ENCODE measurements at regions of chr19 and their contacts with region 1.

Region 1: GRCh38 chr19:44752816-44753618 is 4.5 kb downstream of the BCL3 start:
- DNase-seq: peak; percentile 95 to 97 (median 96)
- ATAC-seq: peak; percentile 62 to 75 (median 71)
- H3K4me3 ChIP-seq: peak overlapping the region; percentile 25 to 72 (median 55)
- H3K27ac ChIP-seq: peak overlapping the region; percentile 81 to 98 (median 92)
- H3K4me1 ChIP-seq: peaks cover 0 to 59% (median 17%) of the 10 kb centered on the region in 4 donors
- H3K27me3 ChIP-seq: no peaks in the 10 kb centered on the region
- CTCF ChIP-seq: peak in 2 of 4 donors; percentile 8 to 16
- POLR2A ChIP-seq: peak; percentile 71

Region 2: GRCh38 chr19:44689056-44689895 is 63.7 kb before region 1 on chr19:
- intact Hi-C with region 1: loop called in 1 of 2 experiments (anchors 10 kb)
- DNase-seq: peak; percentile 78 to 82 (median 78)
- ATAC-seq: peak; percentile 39 to 65 (median 58)
- H3K4me3 ChIP-seq: no peak overlapping the region
- H3K27ac ChIP-seq: peak overlapping the region in 1 of 3 donors; percentile 30
- H3K4me1 ChIP-seq: peaks cover 3 to 52% (median 20%) of the 10 kb centered on the region in 4 donors
- H3K27me3 ChIP-seq: no peaks in the 10 kb centered on the region
- CTCF ChIP-seq: peak; percentile 91 to 93 (median 92)
- POLR2A ChIP-seq: no peak

Region 3: DNA sequence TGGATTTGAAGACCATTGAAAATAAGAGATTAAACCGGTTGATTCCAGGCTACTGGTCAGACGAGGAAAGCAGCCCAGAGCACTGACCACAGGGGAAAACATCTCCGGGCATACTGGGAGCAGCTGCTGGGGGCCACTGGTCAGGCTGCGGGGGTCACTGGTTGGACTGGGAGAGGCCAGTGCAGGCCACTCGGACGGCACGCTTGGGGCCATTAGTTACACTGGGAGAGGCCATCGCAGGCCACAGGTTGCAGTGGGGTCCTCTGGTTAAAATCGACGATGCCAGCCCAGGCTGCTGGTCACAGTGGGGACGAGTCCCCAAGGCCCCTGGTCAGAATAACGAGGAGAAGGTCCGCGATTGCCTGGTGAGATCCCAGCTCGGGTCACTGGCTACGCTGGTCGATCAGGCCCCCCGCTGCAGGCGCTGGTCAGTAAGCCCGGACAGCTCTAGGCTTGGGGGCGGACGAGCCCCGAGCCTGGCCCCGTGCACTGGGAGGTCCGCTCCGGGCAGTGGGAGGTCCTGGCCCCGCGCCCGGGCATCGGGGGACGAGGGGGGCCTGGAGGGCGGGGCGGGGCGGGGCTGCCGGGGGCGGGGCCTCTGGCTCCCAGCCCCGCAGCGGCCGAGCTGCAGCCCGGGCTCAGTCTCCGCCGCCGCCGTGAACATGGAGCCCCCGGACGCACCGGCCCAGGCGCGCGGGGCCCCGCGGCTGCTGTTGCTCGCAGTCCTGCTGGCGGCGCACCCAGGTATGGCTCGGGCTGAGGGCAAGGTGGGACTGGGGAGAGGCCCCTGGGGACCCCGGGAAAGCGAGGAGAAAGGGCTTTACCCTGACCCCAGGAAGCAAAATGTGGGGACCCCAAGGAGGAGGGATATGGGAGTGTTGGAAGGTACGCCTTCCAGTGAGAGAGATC is 55.7 kb after region 1 on chr19 and contains the start of gene BCAM:
- intact Hi-C with region 1: no loop called
- DNase-seq: peak; percentile 85 to 90 (median 86)
- ATAC-seq: peak; percentile 72 to 76 (median 74)
- H3K4me3 ChIP-seq: peak within 1 kb of the TSS; percentile 53 to 56 (median 54)
- H3K27ac ChIP-seq: peak within 1 kb of the TSS; percentile 38 to 75 (median 72)
- H3K4me1 ChIP-seq: peaks cover 0 to 23% (median 10%) of the 10 kb centered on the region in 4 donors
- H3K27me3 ChIP-seq: no peaks in the 10 kb centered on the region
- CTCF ChIP-seq: no peak
- POLR2A ChIP-seq: peak; percentile 51
- total RNA-seq, gene BCAM: 26.5 to 48.3 (median 32.7) TPM